ENCODE measurements at regions of chr18 and their contacts with region 1.

Region 1: DNA sequence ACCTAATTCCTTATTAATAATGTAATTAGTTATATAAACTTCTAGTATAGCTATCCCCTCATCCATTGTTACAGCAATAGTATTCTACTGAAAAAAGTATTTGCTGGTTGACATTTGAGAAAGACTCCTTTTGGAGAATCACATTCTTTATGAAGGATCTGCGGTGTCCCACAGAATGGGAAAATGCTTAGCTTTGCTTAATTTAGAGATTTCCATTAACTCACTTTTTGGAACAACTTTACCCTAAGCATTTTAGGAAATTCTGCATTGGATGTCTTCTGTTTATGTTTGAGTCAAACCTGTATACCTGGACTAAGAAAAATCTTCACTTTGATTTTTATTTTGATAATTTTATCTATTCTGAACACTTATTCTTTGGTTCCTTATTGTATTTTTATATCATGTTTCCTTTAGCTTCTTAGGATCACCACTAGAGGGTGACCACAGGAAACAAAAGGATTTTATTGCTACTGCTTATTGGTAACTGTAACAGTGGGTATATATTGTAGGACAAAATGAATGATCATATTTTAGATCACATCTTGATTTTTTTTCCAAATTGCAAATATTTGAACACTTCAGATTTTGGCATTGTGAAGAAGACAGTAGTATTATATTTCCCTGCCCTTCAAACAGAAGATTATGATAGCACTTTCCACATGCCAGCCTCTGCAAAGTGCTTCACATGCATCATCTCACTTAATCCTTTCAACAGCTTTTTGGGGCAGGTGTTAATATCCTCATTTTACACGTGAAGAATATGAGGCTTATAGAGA is 79.6 kb downstream of the MIB1 start:
- DNase-seq: peak; percentile 42
- H3K4me3 ChIP-seq: no peak overlapping the region
- H3K27ac ChIP-seq: no peak overlapping the region
- H3K4me1 ChIP-seq: no peaks in the 10 kb centered on the region
- H3K27me3 ChIP-seq: no peaks in the 10 kb centered on the region
- CTCF ChIP-seq: peak; percentile 34
- POLR2A ChIP-seq: no peak

Region 2: GRCh38 chr18:21391074-21391673 is 429.0 kb before region 1 on chr18:
- CTCF ChIA-PET with region 1: no interaction called
- POLR2A ChIA-PET with region 1: no interaction called
- dilution Hi-C with region 1: no loop called
- intact Hi-C with region 1: loop called (anchors 10 kb)
- DNase-seq: peak; percentile 11
- H3K4me3 ChIP-seq: no peak overlapping the region
- H3K27ac ChIP-seq: no peak overlapping the region
- H3K4me1 ChIP-seq: no peaks in the 10 kb centered on the region
- H3K27me3 ChIP-seq: no peaks in the 10 kb centered on the region
- CTCF ChIP-seq: no peak
- POLR2A ChIP-seq: no peak

Region 3: DNA sequence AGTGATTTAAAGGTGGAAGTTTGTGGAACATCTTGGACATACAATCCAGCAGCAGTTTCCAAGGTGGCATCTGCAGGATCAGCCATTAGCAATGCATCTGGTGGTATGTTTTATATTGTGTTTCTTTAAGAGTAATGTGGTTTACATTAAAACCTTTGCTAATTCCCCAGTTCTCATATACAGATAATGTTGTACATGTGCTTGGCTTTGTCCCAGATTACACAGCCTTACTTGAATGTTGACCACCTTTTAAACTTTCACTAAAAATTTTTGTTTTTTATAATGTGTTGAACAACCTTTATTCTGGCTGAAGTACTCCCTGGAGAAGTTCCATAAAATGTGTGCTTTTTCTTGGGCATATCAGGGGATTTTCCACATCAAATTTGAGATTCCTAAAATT is 22.1 kb before region 1 on chr18:
- CTCF ChIA-PET with region 1: interaction called, 10 read pairs
- POLR2A ChIA-PET with region 1: no interaction called
- dilution Hi-C with region 1: no loop called
- intact Hi-C with region 1: no loop called
- DNase-seq: no peak
- H3K4me3 ChIP-seq: no peak overlapping the region
- H3K27ac ChIP-seq: no peak overlapping the region
- H3K4me1 ChIP-seq: no peaks in the 10 kb centered on the region
- H3K27me3 ChIP-seq: no peaks in the 10 kb centered on the region
- CTCF ChIP-seq: no peak
- POLR2A ChIP-seq: no peak

Region 4: GRCh38 chr18:21831413-21831831 is 11.2 kb after region 1 on chr18:
- CTCF ChIA-PET with region 1: interaction called, 29 read pairs
- POLR2A ChIA-PET with region 1: no interaction called
- dilution Hi-C with region 1: no loop called
- intact Hi-C with region 1: no loop called
- DNase-seq: no peak
- H3K4me3 ChIP-seq: no peak overlapping the region
- H3K27ac ChIP-seq: no peak overlapping the region
- H3K4me1 ChIP-seq: peaks cover 19% of the 10 kb centered on the region
- H3K27me3 ChIP-seq: no peaks in the 10 kb centered on the region
- CTCF ChIP-seq: no peak
- POLR2A ChIP-seq: no peak

Region 5: DNA sequence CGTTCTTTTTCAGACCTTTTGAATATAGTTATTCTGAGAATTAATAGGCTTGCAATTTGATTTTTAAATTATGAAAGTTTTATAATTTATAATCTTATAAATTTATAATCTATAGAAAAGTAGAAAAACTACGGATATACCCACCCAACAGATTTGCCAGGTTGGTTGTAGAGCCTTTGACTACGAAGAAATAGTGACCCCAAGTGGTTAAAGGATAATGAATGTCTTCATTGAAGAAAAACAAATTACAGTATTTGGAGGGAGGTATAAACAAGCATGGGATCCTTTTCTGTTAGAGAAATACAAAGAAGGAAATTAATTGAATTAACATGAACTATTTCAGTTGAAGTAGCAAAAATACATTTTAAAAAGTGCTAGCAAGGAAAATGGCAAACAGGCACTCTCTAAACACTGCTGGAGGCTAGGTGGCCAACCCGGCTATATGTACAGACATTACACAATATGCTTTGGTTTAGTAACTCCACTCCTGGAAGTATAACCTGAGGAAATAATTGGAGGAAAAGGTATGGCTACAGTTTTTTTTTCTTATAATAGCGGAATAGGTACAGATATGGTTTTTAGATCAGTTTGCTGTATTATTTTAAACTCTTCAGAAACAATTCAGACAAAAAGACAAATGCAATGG is 31.2 kb after region 1 on chr18:
- CTCF ChIA-PET with region 1: interaction called, 18 read pairs
- POLR2A ChIA-PET with region 1: no interaction called
- dilution Hi-C with region 1: no loop called
- intact Hi-C with region 1: loop called (anchors 1 kb)
- DNase-seq: peak; percentile 32
- H3K4me3 ChIP-seq: no peak overlapping the region
- H3K27ac ChIP-seq: no peak overlapping the region
- H3K4me1 ChIP-seq: no peaks in the 10 kb centered on the region
- H3K27me3 ChIP-seq: no peaks in the 10 kb centered on the region
- CTCF ChIP-seq: peak in 1 of 2 donors; percentile 6
- POLR2A ChIP-seq: no peak